Activated B cell treated with CpG ODN at 0.5 μM for 24 hours (primary cell): ENCODE measurements at regions of chr14 and their contacts with region 1.

Region 1: DNA sequence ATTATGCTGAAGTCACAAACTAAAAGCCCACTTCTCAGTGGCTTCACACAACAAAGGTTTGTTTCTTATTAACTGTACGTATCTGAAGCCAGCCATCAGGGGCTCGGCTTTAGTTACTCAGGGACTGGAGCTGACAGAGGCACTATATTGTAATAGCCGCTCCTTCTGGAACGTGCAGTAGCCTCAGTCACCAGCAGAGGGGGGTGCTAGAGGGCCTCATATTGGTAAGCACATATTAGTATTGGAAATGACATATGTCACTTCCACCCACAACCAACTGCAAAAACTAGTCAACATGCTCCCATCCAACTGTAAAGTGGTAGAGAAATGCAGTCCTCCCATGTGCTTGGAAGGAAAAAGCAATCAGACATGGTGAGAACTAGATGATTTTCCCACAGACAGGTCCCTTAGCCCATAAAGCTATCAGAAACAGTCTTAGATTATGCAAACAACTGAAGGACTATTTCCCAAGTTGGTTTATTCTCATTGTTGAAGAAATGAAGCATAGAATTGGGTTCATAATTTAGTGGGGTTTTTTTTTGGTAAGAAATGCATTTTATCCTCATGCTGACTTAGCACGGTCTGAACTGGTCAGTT is 183.6 kb upstream of the G2E3 start:
- DNase-seq: peak; percentile 24
- ATAC-seq: peak; percentile 71
- H3K4me3 Mint-ChIP-seq: no peak overlapping the region
- H3K27ac Mint-ChIP-seq: no peak overlapping the region
- H3K4me1 Mint-ChIP-seq: no peaks in the 10 kb centered on the region
- H3K27me3 Mint-ChIP-seq: peaks cover 8% of the 10 kb centered on the region
- CTCF ChIP-seq: no peak

Region 2: GRCh38 chr14:30521899-30522736 is 146.7 kb after region 1 on chr14:
- CTCF ChIA-PET with region 1: interaction called, 7 read pairs
- POLR2A ChIA-PET with region 1: no interaction called
- intact Hi-C with region 1: loop called (anchors 1 kb)
- DNase-seq: no peak
- ATAC-seq: no peak
- H3K4me3 Mint-ChIP-seq: no peak overlapping the region
- H3K27ac Mint-ChIP-seq: no peak overlapping the region
- H3K4me1 Mint-ChIP-seq: peaks cover 4% of the 10 kb centered on the region
- H3K27me3 Mint-ChIP-seq: peaks cover 2% of the 10 kb centered on the region
- CTCF ChIP-seq: peak; percentile 83

Region 3: DNA sequence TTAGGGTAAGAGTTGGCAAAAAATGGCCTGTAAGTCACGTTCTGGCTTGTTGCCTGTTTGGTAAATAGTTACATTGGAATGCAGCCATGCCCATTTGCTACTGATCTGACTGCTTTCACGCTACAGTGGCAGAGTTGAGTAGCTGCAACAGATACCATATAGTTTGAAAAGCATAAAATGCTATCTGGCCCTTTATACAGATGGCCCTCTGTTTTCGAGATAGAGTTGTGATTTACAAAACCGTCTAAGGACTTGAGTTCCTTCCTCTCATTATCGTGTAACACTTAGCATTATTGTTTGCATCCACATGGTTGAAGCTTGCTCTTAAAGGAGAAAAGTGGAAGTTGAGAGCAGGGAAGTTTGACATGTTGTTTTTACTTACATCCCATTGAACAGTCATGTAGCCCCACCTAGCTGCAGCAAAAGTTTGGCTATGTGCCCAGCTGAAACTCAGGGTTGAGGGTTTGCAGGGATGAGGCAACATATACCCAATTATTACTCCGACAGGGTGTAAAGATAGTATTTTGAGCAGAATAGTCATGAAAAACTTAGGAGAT is 235.5 kb after region 1 on chr14:
- CTCF ChIA-PET with region 1: interaction called, 5 read pairs
- POLR2A ChIA-PET with region 1: no interaction called
- intact Hi-C with region 1: loop called (anchors 1 kb)
- DNase-seq: no peak
- ATAC-seq: no peak
- H3K4me3 Mint-ChIP-seq: peak overlapping the region; percentile 38
- H3K27ac Mint-ChIP-seq: no peak overlapping the region
- H3K4me1 Mint-ChIP-seq: no peaks in the 10 kb centered on the region
- H3K27me3 Mint-ChIP-seq: no peaks in the 10 kb centered on the region
- CTCF ChIP-seq: no peak